ENCODE measurements at regions of chr12 and their contacts with region 1.

Region 1: DNA sequence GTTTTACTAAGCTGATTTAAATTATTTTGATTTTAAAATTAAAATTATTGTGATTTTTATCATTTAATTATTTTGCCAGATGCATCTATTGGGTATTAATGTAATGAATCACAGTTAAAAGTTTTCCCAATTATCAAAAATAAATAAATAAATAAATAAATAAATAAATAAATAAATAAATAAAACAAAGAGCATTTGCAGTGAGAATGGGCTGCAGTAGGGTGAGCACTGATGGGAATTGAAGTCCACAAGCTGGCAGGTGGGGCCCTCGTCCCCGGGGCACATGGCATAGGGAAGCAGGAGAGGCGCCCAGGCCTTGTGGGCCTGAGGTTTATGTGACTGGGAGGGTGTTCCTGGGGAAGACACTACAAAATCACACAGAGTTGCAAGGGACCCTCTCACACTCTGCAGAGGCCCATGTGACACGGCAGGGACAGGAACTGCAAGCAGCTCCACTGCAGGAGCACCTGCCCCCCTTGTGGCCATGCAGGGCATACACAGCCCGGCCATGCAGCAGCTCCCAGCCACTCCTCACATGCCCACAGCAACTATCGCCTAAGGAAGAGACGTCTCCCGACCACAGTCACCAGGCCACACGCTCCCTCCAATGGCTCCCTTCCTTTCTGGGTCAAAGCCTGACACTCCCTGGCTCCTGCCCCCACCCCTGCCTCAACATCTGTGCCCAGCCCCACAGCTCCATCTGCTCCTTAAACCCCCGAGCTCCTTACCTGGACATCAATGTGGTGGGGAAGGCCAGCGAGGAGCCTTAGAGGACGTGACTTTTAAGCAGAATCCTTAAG is 256.3 kb upstream of the SFSWAP start:
- DNase-seq: peak; percentile 77 to 85 (median 83)
- H3K4me3 ChIP-seq: no peak overlapping the region
- H3K27ac ChIP-seq: no peak overlapping the region
- H3K4me1 ChIP-seq: peaks cover 0 to 9% (median 5%) of the 10 kb centered on the region in 4 experiments
- H3K27me3 ChIP-seq: no peaks in the 10 kb centered on the region

Region 2: DNA sequence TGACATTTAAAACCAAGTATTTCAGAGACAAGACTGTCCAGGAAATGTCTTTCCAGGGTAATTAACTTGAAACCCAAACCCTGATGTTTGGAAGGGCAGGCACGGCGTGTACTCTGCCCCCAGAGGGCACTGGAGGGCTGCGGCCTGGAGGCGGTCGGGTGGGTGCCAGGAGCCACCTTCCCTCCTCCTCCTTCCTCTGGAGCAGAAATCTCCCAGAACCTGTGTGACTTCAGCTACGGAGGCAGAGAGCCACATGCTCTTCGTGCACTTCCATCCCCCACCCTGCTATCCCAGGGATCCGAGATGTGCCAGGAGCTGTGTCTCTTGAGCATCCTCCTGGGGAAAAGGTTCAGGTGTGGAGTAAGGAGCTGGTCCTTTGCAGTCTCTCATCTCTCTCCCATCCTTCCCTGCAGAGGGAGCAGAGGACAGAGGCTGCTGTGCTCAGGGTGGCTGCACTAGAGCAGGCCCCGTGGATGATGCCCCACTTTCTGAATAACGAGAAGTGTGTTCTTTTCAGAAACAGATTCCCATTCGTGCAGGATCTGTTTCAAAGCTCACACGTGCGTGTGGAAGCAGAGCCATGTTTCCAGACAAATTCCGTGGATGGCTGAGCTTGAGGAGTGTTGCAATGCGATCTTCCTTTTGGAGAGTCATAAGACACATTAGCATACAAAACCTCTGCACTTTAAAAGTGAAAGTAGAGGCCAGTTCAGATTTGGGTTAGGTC is 338.1 kb before region 1 on chr12:
- CTCF ChIA-PET with region 1: interaction called, 50 read pairs
- POLR2A ChIA-PET with region 1: no interaction called
- DNase-seq: peak in 2 of 3 donors; percentile 23 to 37
- H3K4me3 ChIP-seq: no peak overlapping the region
- H3K27ac ChIP-seq: no peak overlapping the region
- H3K4me1 ChIP-seq: peaks cover 0 to 8% (median 0%) of the 10 kb centered on the region in 4 experiments
- H3K27me3 ChIP-seq: no peaks in the 10 kb centered on the region

Region 3: DNA sequence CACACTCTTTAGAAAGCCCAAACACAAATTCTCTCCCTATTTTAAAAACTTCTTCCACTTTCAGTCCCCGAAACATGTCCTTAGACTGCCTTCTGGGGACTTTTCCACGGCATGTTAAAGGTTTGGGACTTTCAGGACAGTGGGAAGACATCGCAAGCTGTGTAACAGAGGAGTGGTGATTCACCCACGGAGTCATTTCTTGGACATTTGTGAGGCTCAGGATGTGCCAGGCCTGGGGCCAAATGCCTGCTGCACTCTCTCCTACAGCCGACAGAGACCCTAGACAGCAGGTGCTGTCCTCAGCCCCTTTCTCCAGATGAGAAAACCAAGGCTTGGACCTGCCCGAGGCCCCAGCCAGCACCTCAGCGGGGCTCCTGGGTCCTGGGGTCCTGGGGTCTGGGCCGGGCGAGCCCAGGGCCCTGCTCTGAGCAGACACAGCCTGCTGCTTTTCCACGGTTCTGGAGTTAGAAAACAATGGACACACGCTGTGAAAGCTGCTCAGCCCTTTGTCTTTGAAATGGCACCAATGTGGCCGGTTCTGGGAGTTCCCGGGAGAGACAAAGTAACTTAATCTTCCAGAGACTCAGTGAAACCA is 113.9 kb before region 1 on chr12:
- CTCF ChIA-PET with region 1: no interaction called
- POLR2A ChIA-PET with region 1: no interaction called
- DNase-seq: no peak
- H3K4me3 ChIP-seq: no peak overlapping the region
- H3K27ac ChIP-seq: no peak overlapping the region
- H3K4me1 ChIP-seq: no peaks in the 10 kb centered on the region
- H3K27me3 ChIP-seq: no peaks in the 10 kb centered on the region

Measured in common myeloid progenitor, CD34-positive (primary cell).